K562 (cell line): ENCODE measurements at regions of chr9 and their contacts with region 1.

Region 1: GRCh38 chr9:127586537-127586936 is 25.5 kb upstream of the STXBP1 start:
- DNase-seq: peak; percentile 63 to 83 (median 70)
- ATAC-seq: peak; percentile 96
- H3K4me3 ChIP-seq: no peak overlapping the region
- H3K27ac ChIP-seq: no peak overlapping the region
- H3K4me1 ChIP-seq: peaks cover 0 to 5% of the 10 kb centered on the region in 2 experiments; a peak in 2 of 5 replicates
- H3K27me3 ChIP-seq: no peaks in the 10 kb centered on the region
- CTCF ChIP-seq: peak; percentile 90 to 97 (median 92)
- EP300 ChIP-seq: no peak
- POLR2A ChIP-seq: no peak
- RAD21 ChIP-seq: peak; percentile 90 to 99

Region 2: DNA sequence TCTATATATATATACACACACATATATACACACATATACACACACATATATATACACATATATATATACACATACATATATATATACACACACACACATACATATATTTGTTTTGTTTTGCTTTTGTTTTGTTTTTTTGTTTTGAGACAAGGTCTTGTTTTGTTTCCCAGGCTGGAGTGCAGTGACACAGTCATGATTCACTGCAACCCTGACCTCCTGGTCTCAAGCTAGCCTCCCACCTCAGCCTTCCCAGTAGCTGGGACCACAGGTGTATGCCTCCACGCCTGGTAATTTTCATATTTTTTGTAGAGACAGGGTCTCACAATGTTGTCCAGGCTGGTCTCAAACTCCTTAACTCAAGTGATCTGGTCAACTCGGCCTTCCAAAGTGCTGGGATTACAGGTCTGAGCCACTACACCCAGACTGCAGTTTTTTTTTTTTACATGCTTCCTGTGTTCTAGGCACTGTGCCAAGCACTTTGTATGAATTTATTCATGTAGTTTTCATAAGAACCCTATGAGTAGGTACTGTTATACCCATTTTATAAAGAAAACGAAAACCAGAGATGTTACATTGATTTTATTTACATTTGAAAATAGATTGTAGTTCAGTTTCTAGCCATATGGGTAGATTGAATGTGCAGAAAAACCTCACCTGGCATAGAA is 1718.7 kb before region 1 on chr9:
- CTCF ChIA-PET with region 1: no interaction called
- POLR2A ChIA-PET with region 1: no interaction called
- in situ Hi-C with region 1: no loop called
- intact Hi-C with region 1: no loop called
- DNase-seq: no peak
- ATAC-seq: no peak
- H3K4me3 ChIP-seq: no peak overlapping the region
- H3K27ac ChIP-seq: no peak overlapping the region
- H3K4me1 ChIP-seq: no peaks in the 10 kb centered on the region
- H3K27me3 ChIP-seq: no peaks in the 10 kb centered on the region
- CTCF ChIP-seq: no peak
- EP300 ChIP-seq: no peak
- POLR2A ChIP-seq: no peak
- RAD21 ChIP-seq: no peak

Region 3: GRCh38 chr9:127205183-127205470 is 381.4 kb before region 1 on chr9:
- CTCF ChIA-PET with region 1: no interaction called
- POLR2A ChIA-PET with region 1: no interaction called
- in situ Hi-C with region 1: loop called (anchors 10 kb)
- intact Hi-C with region 1: no loop called
- DNase-seq: peak; percentile 49 to 59 (median 57)
- ATAC-seq: peak; percentile 66
- H3K4me3 ChIP-seq: no peak overlapping the region
- H3K27ac ChIP-seq: no peak overlapping the region
- H3K4me1 ChIP-seq: peaks cover 16 to 19% of the 10 kb centered on the region in 2 experiments; a peak in 4 of 5 replicates
- H3K27me3 ChIP-seq: peaks cover 4 to 80% of the 10 kb centered on the region in 2 experiments; a peak in 3 of 5 replicates
- CTCF ChIP-seq: peak; percentile 21 to 48 (median 44); a peak in 4 of 6 replicates
- EP300 ChIP-seq: no peak
- POLR2A ChIP-seq: no peak
- RAD21 ChIP-seq: peak in 1 of 2 experiments; percentile 44; a peak in 2 of 4 replicates

Region 4: GRCh38 chr9:127360829-127361228 is 225.7 kb before region 1 on chr9:
- CTCF ChIA-PET with region 1: interaction called, 3 read pairs
- POLR2A ChIA-PET with region 1: no interaction called
- in situ Hi-C with region 1: no loop called
- intact Hi-C with region 1: loop called (anchors 5 kb)
- DNase-seq: peak; percentile 47 to 58 (median 54)
- ATAC-seq: peak; percentile 90
- H3K4me3 ChIP-seq: no peak overlapping the region
- H3K27ac ChIP-seq: no peak overlapping the region
- H3K4me1 ChIP-seq: peaks cover 7 to 9% of the 10 kb centered on the region in 2 experiments; a peak in 3 of 5 replicates
- H3K27me3 ChIP-seq: peaks cover 3 to 8% of the 10 kb centered on the region in 2 experiments; a peak in 3 of 5 replicates
- CTCF ChIP-seq: peak; percentile 50 to 71 (median 56); a peak in 5 of 6 replicates
- EP300 ChIP-seq: no peak
- POLR2A ChIP-seq: no peak
- RAD21 ChIP-seq: peak; percentile 36 to 68

Region 5: GRCh38 chr9:127519301-127520166 is 67.0 kb before region 1 on chr9:
- CTCF ChIA-PET with region 1: no interaction called
- POLR2A ChIA-PET with region 1: interaction called, 3 read pairs
- in situ Hi-C with region 1: no loop called
- intact Hi-C with region 1: loop called (anchors 5 kb)
- DNase-seq: no peak
- ATAC-seq: no peak
- H3K4me3 ChIP-seq: no peak overlapping the region
- H3K27ac ChIP-seq: no peak overlapping the region
- H3K4me1 ChIP-seq: peaks cover 0 to 5% of the 10 kb centered on the region in 2 experiments; a peak in 1 of 5 replicates
- H3K27me3 ChIP-seq: no peaks in the 10 kb centered on the region
- CTCF ChIP-seq: no peak
- EP300 ChIP-seq: no peak
- POLR2A ChIP-seq: no peak
- RAD21 ChIP-seq: no peak

Region 6: GRCh38 chr9:127869310-127870152 is 283.0 kb after region 1 on chr9:
- CTCF ChIA-PET with region 1: no interaction called
- POLR2A ChIA-PET with region 1: no interaction called
- in situ Hi-C with region 1: loop called (anchors 10 kb)
- intact Hi-C with region 1: loop called (anchors 10 kb)
- DNase-seq: peak; percentile 91 to 93 (median 92)
- ATAC-seq: peak; percentile 97
- H3K4me3 ChIP-seq: no peak overlapping the region
- H3K27ac ChIP-seq: no peak overlapping the region
- H3K4me1 ChIP-seq: peaks cover 17 to 69% of the 10 kb centered on the region in 2 experiments
- H3K27me3 ChIP-seq: no peaks in the 10 kb centered on the region
- CTCF ChIP-seq: peak; percentile 93 to 99 (median 97)
- EP300 ChIP-seq: 0 out of 2 replicates have a peak, but pooled peaks have one; percentile 16
- POLR2A ChIP-seq: no peak
- RAD21 ChIP-seq: peak; percentile 97 to 98